Activated CD4-positive, alpha-beta memory T cell treated with anti-CD3 and anti-CD28 coated beads for 36 hours (primary cell): ENCODE measurements at regions of chr4 and their contacts with region 1.

Region 1: GRCh38 chr4:73258686-73259570 is at the start of gene ANKRD17:
- DNase-seq: peak; percentile 95
- H3K4me3 Mint-ChIP-seq: peak within 1 kb of the TSS; percentile 98
- H3K27ac Mint-ChIP-seq: peak within 1 kb of the TSS; percentile 98
- H3K4me1 Mint-ChIP-seq: peaks cover 45% of the 10 kb centered on the region
- H3K27me3 Mint-ChIP-seq: no peaks in the 10 kb centered on the region
- total RNA-seq, gene ANKRD17: 43.2 to 44.7 TPM

Region 2: GRCh38 chr4:73019462-73020047 is 239.4 kb before region 1 on chr4:
- CTCF ChIA-PET with region 1: interaction called, 3 read pairs
- POLR2A ChIA-PET with region 1: no interaction called
- intact Hi-C with region 1: loop called (anchors 5 kb)
- DNase-seq: no peak
- H3K4me3 Mint-ChIP-seq: no peak overlapping the region
- H3K27ac Mint-ChIP-seq: no peak overlapping the region
- H3K4me1 Mint-ChIP-seq: no peaks in the 10 kb centered on the region
- H3K27me3 Mint-ChIP-seq: peaks cover 5% of the 10 kb centered on the region

Region 3: GRCh38 chr4:73069338-73070073 is 189.4 kb before region 1 on chr4 and contains the start of gene COX18:
- CTCF ChIA-PET with region 1: interaction called, 18 read pairs
- POLR2A ChIA-PET with region 1: interaction called, 39 read pairs
- intact Hi-C with region 1: loop called (anchors 1 kb)
- DNase-seq: peak; percentile 97
- H3K4me3 Mint-ChIP-seq: peak within 1 kb of the TSS; percentile 83
- H3K27ac Mint-ChIP-seq: peak within 1 kb of the TSS; percentile 99
- H3K4me1 Mint-ChIP-seq: peaks cover 29% of the 10 kb centered on the region
- H3K27me3 Mint-ChIP-seq: no peaks in the 10 kb centered on the region
- total RNA-seq, gene COX18: 18.6 to 20.6 TPM

Region 4: DNA sequence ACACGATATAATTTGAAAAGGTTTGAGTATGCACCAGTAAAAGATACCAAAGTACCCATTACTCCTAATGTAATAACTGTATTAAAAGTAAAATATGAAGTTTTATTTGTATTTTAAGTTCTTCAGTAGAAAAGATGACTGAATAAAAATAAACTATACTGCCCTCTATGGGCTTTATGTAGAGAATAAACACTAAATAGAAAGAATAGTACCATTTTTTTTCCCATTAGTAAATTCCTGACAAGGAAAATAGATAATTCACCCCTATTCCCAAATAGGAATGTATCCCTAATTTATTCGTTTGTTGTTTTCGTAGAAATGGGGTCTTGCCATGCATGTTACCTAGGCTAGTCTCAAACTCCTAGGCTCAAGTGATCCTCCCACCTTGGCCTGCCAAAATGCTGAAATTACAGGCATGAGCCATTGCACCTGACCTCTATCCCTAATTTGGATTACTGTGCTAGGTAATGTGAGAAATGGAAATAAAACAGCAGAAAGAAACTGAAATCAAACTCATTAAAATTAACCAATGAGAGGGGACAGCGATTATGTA is 115.9 kb before region 1 on chr4:
- CTCF ChIA-PET with region 1: interaction called, 17 read pairs
- POLR2A ChIA-PET with region 1: no interaction called
- intact Hi-C with region 1: loop called (anchors 2 kb)
- DNase-seq: no peak
- H3K4me3 Mint-ChIP-seq: no peak overlapping the region
- H3K27ac Mint-ChIP-seq: no peak overlapping the region
- H3K4me1 Mint-ChIP-seq: peaks cover 9% of the 10 kb centered on the region
- H3K27me3 Mint-ChIP-seq: no peaks in the 10 kb centered on the region

Region 5: DNA sequence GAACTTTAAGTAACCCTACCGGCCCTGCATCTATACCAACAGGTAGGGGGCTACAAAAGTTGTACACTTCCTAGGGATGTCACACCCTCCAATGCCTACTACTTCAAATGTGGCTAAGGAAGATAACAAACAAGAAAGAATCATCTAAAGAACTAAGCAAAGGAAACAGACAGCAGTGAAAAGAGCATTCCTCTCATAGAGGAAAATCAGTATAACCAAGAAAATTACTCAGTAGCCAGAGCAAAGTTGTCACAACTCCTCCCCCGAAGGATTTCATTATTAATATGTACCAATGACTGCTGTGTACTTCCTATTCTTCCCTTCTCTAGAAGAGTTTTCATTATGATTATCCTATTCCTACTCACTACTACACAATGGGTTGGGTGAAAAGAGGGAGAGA is 13.0 kb before region 1 on chr4:
- CTCF ChIA-PET with region 1: interaction called, 8 read pairs
- POLR2A ChIA-PET with region 1: no interaction called
- intact Hi-C with region 1: loop called (anchors 1 kb)
- DNase-seq: no peak
- H3K4me3 Mint-ChIP-seq: no peak overlapping the region
- H3K27ac Mint-ChIP-seq: peak overlapping the region; percentile 28
- H3K4me1 Mint-ChIP-seq: peaks cover 56% of the 10 kb centered on the region
- H3K27me3 Mint-ChIP-seq: no peaks in the 10 kb centered on the region

Region 6: DNA sequence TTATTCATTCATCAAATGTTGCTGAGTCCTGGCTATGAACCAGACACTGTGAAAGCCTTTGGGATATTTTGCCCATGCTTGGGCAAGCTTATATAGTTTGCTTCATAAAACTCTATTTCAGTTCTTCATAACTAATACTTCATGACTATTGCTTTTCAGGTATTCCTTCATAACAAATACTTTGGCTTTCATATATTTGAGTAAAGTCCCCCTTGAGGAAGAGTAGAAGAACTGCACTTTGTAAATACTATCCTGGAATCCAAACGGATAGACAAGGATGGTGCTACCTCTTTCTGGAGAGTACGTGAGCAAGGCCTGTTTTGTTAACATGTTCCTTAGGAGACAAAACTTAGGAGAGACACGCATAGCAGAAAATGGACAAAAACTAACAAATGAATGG is 175.4 kb after region 1 on chr4:
- CTCF ChIA-PET with region 1: no interaction called
- POLR2A ChIA-PET with region 1: no interaction called
- intact Hi-C with region 1: no loop called
- DNase-seq: no peak
- H3K4me3 Mint-ChIP-seq: no peak overlapping the region
- H3K27ac Mint-ChIP-seq: no peak overlapping the region
- H3K4me1 Mint-ChIP-seq: no peaks in the 10 kb centered on the region
- H3K27me3 Mint-ChIP-seq: peaks cover 6% of the 10 kb centered on the region

Region 7: GRCh38 chr4:73487233-73487632 is 228.3 kb after region 1 on chr4:
- CTCF ChIA-PET with region 1: no interaction called
- POLR2A ChIA-PET with region 1: no interaction called
- intact Hi-C with region 1: no loop called
- DNase-seq: no peak
- H3K4me3 Mint-ChIP-seq: no peak overlapping the region
- H3K27ac Mint-ChIP-seq: no peak overlapping the region
- H3K4me1 Mint-ChIP-seq: no peaks in the 10 kb centered on the region
- H3K27me3 Mint-ChIP-seq: peaks cover 4% of the 10 kb centered on the region

Region 8: DNA sequence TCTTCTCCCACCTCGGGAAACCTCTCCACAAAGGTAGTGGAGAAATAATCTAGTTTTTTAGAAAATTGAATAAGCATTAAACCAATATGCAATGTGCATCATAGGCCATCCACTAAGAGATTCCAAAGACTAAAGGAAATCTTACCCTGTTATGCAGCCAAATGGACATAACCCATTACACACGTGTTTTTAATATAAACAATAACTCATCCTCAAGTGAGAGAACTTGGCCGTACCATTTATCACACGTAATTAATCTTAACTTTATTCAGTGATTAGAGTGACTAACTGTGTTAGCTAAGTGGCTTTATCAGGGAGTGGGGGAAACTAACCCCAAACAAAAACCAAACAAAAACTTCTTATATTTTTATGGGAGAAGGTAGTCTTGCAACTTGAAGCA is 280.5 kb after region 1 on chr4:
- CTCF ChIA-PET with region 1: no interaction called
- POLR2A ChIA-PET with region 1: no interaction called
- intact Hi-C with region 1: loop called (anchors 5 kb)
- DNase-seq: no peak
- H3K4me3 Mint-ChIP-seq: no peak overlapping the region
- H3K27ac Mint-ChIP-seq: no peak overlapping the region
- H3K4me1 Mint-ChIP-seq: peaks cover 7% of the 10 kb centered on the region
- H3K27me3 Mint-ChIP-seq: peaks cover 6% of the 10 kb centered on the region